ENCODE measurements at regions of chr16 and their contacts with region 1.

Region 1: GRCh38 chr16:31032736-31033708 is at the start of gene STX4:
- DNase-seq: peak; percentile 95
- H3K4me3 ChIP-seq: peak within 1 kb of the TSS; percentile 82 to 94 (median 89)
- H3K27ac ChIP-seq: peak within 1 kb of the TSS; percentile 78
- H3K4me1 ChIP-seq: peaks cover 12% of the 10 kb centered on the region
- H3K27me3 ChIP-seq: no peaks in the 10 kb centered on the region
- CTCF ChIP-seq: no peak
- total RNA-seq, gene STX4: 13.3 to 64.3 TPM

Region 2: DNA sequence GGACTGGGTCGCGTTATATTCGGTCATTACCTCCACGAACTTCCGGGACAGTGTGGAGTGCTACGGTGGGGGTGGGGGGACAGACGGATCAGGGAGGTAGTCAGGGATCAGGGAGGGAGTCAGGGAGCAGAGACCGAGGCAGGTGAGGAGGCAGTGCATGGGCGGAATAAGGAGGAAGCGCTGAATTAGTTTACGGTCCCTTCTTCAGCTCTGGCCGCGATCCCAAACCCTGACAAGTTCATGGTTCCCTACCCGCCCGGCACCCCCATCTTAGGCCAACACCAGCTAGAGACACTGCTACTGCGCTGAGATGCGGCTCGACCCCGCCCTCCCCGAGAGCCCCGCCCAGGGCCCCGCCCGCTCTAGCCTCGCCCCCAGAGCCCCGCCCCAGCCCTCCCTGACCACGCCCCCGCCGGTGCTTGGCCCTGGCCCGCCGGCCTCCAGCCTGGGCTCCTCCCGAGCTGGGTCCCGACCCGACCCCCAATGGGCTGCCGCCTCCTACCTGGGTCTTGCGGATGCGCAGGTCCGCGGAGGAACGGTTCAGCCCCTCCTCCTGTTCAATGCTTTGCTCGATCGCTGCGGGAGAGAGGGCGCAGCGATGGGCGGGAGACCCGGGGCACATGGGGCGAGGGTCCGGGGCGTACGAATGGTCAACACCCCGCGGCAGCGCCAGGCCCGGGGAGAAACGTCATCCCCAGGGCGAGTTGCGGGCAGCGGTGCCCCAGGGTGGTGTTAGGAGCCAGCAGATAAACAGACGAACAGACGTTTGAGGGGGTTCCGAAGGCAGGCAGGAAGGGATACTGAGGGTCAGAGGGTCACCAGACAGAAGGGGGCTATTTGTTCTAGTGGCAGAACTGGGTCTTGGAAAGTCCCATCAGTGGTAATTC is 35.8 kb before region 1 on chr16:
- CTCF ChIA-PET with region 1: no interaction called
- dilution Hi-C with region 1: loop called (anchors 5 kb)
- in situ Hi-C with region 1: no loop called
- intact Hi-C with region 1: loop called (anchors 1 kb)
- DNase-seq: peak; percentile 72
- H3K4me3 ChIP-seq: peak overlapping the region; percentile 51 to 68 (median 60)
- H3K27ac ChIP-seq: peak overlapping the region; percentile 85
- H3K4me1 ChIP-seq: peaks cover 36% of the 10 kb centered on the region
- H3K27me3 ChIP-seq: no peaks in the 10 kb centered on the region
- CTCF ChIP-seq: no peak

Region 3: DNA sequence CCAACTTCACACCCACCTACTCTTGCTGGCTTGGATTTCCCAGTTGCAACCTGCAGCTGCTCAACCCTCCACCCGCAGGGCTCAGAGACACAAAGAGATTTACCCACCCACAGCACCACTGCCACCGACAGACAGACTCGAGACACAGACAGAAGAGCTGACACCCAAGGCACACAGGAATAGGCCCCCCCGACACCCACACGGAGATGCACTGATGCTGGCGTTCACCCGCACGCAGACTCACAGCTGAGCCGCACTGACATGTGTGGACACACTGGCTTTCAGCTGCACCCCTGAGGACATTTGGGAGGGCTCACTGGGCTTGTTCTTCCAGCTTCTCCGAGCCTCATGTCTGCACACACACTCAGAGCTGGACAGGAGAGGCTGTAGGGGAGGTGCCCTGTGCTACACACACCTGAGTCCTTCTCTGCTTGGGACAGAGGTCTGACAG is 30.7 kb before region 1 on chr16:
- CTCF ChIA-PET with region 1: no interaction called
- dilution Hi-C with region 1: loop called (anchors 5 kb)
- in situ Hi-C with region 1: no loop called
- intact Hi-C with region 1: loop called (anchors 1 kb)
- DNase-seq: peak; percentile 20
- H3K4me3 ChIP-seq: peak overlapping the region in 1 of 3 experiments; percentile 8
- H3K27ac ChIP-seq: no peak overlapping the region
- H3K4me1 ChIP-seq: peaks cover 30% of the 10 kb centered on the region
- H3K27me3 ChIP-seq: no peaks in the 10 kb centered on the region
- CTCF ChIP-seq: no peak

Region 4: DNA sequence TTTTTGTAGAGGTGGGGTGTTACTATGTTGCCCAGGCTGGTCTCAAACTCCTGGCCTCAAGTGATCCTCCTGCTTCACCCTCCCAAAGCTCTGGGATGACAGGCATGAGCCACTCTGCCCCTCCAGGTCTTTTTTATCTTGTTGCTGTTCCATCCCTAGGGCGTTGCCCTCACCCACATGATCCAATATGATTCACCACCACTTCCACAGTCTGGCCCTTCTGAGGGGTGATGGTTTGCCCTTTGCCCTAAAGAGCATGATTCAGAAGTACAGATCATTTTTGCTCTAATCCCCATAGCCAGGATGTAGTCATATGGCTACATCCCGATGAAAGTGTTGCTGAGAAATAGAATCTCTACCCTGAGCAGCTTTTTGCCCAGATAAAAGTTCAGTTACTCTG is 19.1 kb after region 1 on chr16:
- CTCF ChIA-PET with region 1: no interaction called
- dilution Hi-C with region 1: no loop called
- in situ Hi-C with region 1: no loop called
- intact Hi-C with region 1: loop called (anchors 1 kb)
- DNase-seq: peak; percentile 96
- H3K4me3 ChIP-seq: no peak overlapping the region
- H3K27ac ChIP-seq: peak overlapping the region; percentile 42
- H3K4me1 ChIP-seq: peaks cover 6% of the 10 kb centered on the region
- H3K27me3 ChIP-seq: no peaks in the 10 kb centered on the region
- CTCF ChIP-seq: no peak

Region 5: GRCh38 chr16:31094424-31095120 is 61.5 kb after region 1 on chr16 and contains the start of gene VKORC1:
- CTCF ChIA-PET with region 1: no interaction called
- dilution Hi-C with region 1: no loop called
- in situ Hi-C with region 1: no loop called
- intact Hi-C with region 1: loop called (anchors 1 kb)
- DNase-seq: peak; percentile 99
- H3K4me3 ChIP-seq: peak within 1 kb of the TSS; percentile 57 to 98 (median 71)
- H3K27ac ChIP-seq: peak within 1 kb of the TSS; percentile 81
- H3K4me1 ChIP-seq: peaks cover 4% of the 10 kb centered on the region
- H3K27me3 ChIP-seq: no peaks in the 10 kb centered on the region
- CTCF ChIP-seq: no peak
- total RNA-seq, gene VKORC1: 45.7 to 65.0 TPM